ENCODE measurements at regions of chr15 and their contacts with region 1.

Region 1: GRCh38 chr15:65318870-65319356 is 14.4 kb downstream of the RNU5B-1 start:
- DNase-seq: peak; percentile 34 to 64
- ATAC-seq: peak; percentile 87 to 97
- H3K4me3 ChIP-seq: no peak overlapping the region
- H3K27ac ChIP-seq: no peak overlapping the region
- H3K4me1 ChIP-seq: no peaks in the 10 kb centered on the region
- H3K27me3 ChIP-seq: no peaks in the 10 kb centered on the region
- CTCF ChIP-seq: peak; percentile 91 to 93 (median 93)
- POLR2A ChIP-seq: no peak

Region 2: DNA sequence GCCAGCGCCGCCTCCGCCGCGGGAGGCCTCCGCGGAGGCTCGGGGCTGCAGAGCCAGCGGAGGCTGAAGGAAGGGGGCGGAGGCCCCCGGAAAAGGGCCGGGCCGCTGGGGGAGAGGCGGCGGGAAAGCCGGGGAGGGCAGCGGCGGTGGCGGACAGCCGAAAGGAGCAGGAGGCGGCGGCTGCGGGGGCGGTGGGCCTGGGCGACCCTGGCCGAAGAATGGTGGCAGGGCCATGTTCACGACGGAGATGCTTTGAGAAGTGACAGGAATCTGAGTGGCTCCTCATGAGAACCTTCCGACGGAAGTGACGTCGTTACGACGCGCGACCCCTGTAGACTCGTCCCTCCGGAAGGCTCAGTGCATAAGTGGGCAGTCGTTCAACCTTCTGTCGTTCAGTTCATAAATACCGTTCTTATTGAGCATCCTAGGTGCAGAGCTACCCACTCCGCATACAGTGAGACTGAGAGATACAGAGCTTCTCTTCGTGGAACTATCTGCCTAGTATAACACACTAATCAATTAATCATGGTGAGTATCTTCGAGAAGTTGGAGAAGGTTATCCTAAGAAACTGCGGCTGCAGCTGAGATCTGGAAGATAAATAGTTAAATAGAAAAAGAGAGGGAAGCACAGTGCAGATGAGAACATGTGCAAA is 185.2 kb before region 1 on chr15 and contains the start of gene PDCD7:
- in situ Hi-C with region 1: no loop called
- intact Hi-C with region 1: no loop called
- DNase-seq: peak; percentile 75 to 81
- ATAC-seq: peak; percentile 97 to 99
- H3K4me3 ChIP-seq: peak within 1 kb of the TSS; percentile 69 to 93 (median 78)
- H3K27ac ChIP-seq: peak within 1 kb of the TSS; percentile 71 to 89 (median 88)
- H3K4me1 ChIP-seq: peaks cover 18 to 30% of the 10 kb centered on the region in 2 donors
- H3K27me3 ChIP-seq: no peaks in the 10 kb centered on the region
- CTCF ChIP-seq: no peak
- POLR2A ChIP-seq: peak; percentile 69 to 72
- total RNA-seq, gene PDCD7: 10.4 to 15.7 (median 12.4) TPM

Region 3: DNA sequence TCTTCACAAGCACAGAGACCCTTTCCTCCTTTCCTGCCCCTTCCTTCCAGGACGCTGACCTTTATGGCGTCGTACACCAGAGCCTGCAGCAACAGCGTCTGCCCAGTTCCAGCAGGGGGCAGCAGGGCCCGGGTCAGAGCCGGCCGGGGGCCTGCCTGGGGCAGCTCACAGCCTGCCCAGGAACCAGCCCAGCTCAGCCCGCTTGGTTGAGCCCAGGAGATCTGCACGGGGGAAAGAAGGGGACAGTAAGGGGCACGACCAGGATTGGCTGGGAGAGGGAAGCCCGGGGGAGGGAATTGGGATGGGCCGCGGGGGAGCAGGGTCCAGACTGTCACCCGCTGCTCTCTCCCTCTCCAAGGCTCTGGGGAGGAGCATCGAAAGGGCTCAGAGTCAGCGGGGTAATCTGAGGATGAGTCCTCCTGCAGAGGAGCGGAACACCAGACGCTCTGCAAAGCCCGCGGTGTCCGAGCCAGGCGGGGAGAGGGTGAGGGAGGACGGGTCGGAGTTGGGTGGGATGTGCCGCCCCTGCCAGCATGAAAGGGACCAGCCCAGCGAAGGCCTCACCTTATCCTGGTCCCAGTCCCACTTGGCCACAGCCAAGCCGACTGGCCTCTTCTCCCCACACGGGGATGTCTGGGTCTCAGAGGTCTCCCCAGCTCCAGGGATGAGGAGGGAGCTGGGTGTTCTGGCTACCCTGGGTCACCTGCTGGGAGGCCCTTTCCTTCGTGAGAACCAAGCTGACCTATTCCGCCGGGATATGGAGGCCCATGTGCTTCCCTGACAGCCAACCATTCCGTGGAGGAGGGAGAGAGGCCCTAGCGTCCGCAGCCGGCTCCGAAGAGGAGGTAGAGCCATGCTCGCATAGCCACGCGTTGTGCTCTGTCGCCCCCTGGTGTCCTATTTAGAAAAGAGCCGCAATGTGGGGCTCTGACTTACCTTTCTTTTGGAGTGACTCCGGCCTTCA is 66.3 kb after region 1 on chr15:
- in situ Hi-C with region 1: loop called (anchors 5 kb)
- intact Hi-C with region 1: loop called (anchors 1 kb)
- DNase-seq: peak; percentile 63 to 67
- ATAC-seq: peak; percentile 92 to 93
- H3K4me3 ChIP-seq: peak overlapping the region; percentile 14 to 39 (median 29)
- H3K27ac ChIP-seq: peak overlapping the region in 1 of 4 donors; percentile 4
- H3K4me1 ChIP-seq: peaks cover 3 to 8% of the 10 kb centered on the region in 2 donors
- H3K27me3 ChIP-seq: no peaks in the 10 kb centered on the region
- CTCF ChIP-seq: peak; percentile 63 to 92 (median 89)
- POLR2A ChIP-seq: no peak

Region 4: GRCh38 chr15:65392368-65392767 is 73.5 kb after region 1 on chr15:
- in situ Hi-C with region 1: loop called in 1 of 4 experiments (anchors 5 kb)
- intact Hi-C with region 1: no loop called
- DNase-seq: no peak
- ATAC-seq: no peak
- H3K4me3 ChIP-seq: no peak overlapping the region
- H3K27ac ChIP-seq: no peak overlapping the region
- H3K4me1 ChIP-seq: no peaks in the 10 kb centered on the region
- H3K27me3 ChIP-seq: no peaks in the 10 kb centered on the region
- CTCF ChIP-seq: no peak
- POLR2A ChIP-seq: no peak

Region 5: GRCh38 chr15:65400760-65401610 is 82.1 kb after region 1 on chr15:
- in situ Hi-C with region 1: no loop called
- intact Hi-C with region 1: loop called (anchors 5 kb)
- DNase-seq: peak in 1 of 2 donors; percentile 70
- ATAC-seq: peak; percentile 79 to 92
- H3K4me3 ChIP-seq: no peak overlapping the region
- H3K27ac ChIP-seq: peak overlapping the region; percentile 56 to 68 (median 60)
- H3K4me1 ChIP-seq: peaks cover 23% of the 10 kb centered on the region in 2 donors
- H3K27me3 ChIP-seq: no peaks in the 10 kb centered on the region
- CTCF ChIP-seq: peak; percentile 61 to 74 (median 63)
- POLR2A ChIP-seq: no peak